Pancreas (tissue), 10 donors: ENCODE measurements at regions of chr1 and their contacts with region 1.

Region 1: GRCh38 chr1:163071405-163072255 is 2.5 kb downstream of the RGS4 start:
- DNase-seq: peak in 5 of 6 donors; percentile 18 to 63 (median 33)
- ATAC-seq: peak in 3 of 4 donors; percentile 60 to 80 (median 74)
- H3K4me3 ChIP-seq: no peak overlapping the region
- H3K27ac ChIP-seq: no peak overlapping the region
- H3K4me1 ChIP-seq: no peaks in the 10 kb centered on the region
- H3K27me3 ChIP-seq: peaks cover 0 to 5% (median 0%) of the 10 kb centered on the region in 4 donors
- CTCF ChIP-seq: peak; percentile 27 to 45 (median 40)

Region 2: DNA sequence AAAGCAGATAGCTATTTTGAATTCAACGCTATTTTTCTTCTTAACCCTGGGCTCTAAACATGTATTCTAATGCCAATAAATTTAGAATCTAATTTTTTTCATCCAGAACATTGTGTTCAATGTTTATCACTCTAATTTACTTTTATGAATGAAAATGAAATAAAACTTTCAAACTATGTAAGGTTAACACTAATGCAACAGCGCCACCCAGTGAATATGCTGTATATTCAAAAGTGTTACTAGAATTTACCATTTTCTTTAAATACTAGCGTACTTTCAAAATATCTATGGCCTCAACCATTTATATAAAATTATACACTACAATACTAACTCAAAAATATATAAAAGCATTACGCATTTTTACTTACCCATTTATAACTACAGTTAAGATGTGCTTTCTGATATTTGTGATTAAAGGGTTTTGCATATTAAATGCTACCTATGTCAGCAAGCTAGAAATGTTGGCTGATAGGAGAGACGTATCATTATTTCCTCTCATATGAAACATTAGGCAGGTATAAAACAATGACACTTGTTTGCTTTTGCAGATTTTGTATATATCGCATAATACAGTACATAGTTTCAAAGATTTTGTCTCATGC is 244.2 kb after region 1 on chr1:
- intact Hi-C with region 1: loop called in 2 of 3 experiments (anchors 10 kb)
- DNase-seq: peak in 1 of 6 donors; percentile 26
- ATAC-seq: no peak
- H3K4me3 ChIP-seq: no peak overlapping the region
- H3K27ac ChIP-seq: no peak overlapping the region
- H3K4me1 ChIP-seq: peaks cover 0 to 5% (median 0%) of the 10 kb centered on the region in 3 donors
- H3K27me3 ChIP-seq: no peaks in the 10 kb centered on the region
- CTCF ChIP-seq: peak; percentile 16 to 50 (median 40)

Region 3: DNA sequence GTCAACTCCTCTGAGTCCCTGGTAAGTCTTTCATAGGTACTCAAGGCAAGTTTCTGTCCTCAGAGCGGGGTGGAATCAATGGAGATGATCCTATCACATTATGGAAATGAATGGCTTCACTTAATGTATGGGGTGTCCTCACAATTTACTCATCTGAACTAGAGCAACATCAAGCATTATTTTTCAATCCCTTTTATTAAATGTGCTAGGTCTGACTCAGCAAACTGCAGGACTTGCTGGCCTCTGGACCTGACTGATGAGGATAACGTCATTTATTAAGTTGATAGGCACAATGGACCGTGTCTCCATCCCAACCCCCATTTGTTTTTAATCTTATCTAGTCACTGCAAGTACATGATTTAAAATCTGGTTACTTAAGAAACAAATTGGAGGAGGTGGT is 509.3 kb after region 1 on chr1:
- intact Hi-C with region 1: no loop called
- DNase-seq: no peak
- ATAC-seq: no peak
- H3K4me3 ChIP-seq: no peak overlapping the region
- H3K27ac ChIP-seq: no peak overlapping the region
- H3K4me1 ChIP-seq: peaks cover 0 to 6% (median 3%) of the 10 kb centered on the region in 3 donors
- H3K27me3 ChIP-seq: no peaks in the 10 kb centered on the region
- CTCF ChIP-seq: no peak